HEK293 (cell line): ENCODE measurements at regions of chr15 and their contacts with region 1.

Region 1: DNA sequence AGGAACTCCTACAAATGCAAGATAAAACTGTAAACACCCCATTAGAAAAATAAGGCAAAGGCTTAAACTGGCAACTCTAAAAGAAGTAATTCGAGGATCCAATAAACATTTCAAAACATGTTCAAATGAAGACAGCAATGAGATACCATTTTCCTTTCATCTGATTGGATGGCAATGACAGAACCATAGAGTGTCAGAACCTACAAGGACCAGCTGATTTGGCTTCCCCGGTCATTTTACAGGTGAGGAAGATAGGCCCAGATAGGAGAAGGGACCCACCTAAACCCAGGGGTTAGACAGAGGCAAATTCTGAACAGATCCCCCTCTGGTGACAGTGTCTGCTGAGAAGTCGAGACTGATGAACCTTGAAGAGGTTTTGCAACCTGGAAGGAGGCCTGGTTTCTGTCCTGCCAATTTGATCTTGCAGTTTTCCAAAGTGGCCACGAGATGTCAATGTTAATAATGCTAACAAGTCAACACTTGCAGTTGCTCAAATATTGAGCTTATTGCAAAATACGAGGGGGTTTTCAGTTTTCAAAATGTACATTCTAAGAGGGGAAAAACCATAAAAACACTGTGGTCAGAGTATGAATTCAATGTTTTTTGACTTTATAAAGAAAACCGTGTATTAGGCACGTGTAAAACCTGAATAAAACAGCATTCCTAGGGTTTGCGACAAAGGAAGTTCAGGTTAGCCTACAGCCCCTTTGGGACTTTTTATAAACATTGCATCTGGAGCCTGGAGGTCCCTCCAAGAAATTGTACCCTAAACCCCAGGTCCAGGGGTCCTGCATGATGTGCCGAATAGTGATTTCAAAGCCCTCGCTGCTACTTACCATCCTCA is 21.5 kb downstream of the CFAP161 start:
- H3K4me3 ChIP-seq: no peak overlapping the region
- H3K27ac ChIP-seq: no peak overlapping the region
- H3K4me1 ChIP-seq: no peaks in the 10 kb centered on the region
- CTCF ChIP-seq: peak; percentile 27; the same call in 1 of the 2 replicates

Region 2: DNA sequence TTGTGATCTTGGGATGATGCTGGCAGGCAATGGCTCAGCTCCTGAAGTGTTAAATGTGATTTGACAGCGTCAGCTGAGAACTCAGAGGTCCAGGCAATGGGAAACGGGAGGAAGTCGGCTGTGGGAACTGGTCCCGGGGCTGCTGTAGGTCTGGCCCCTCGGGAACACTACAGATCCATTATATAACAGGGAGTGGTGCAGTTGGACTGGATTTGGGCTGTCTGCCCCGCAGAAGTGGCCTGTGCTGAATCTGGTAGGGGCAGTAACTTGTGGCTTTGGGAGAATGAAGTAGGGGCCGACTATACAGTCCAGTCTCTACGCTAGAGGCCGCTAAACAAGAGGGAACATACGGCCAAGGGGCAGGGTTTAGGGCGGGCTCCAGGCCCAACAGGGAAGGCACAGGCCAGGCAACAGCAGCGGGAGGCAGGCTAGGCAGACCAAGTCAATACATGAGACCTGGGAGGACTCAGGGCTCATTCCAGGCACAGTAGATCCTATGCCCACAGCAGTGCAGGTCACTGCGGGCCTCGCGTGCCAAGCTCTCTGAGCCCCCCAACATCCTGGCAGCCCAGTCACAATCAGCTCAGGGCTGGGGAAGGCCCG is 20.8 kb after region 1 on chr15:
- CTCF ChIA-PET with region 1: interaction called, 12 read pairs
- POLR2A ChIA-PET with region 1: no interaction called
- H3K4me3 ChIP-seq: no peak overlapping the region
- H3K27ac ChIP-seq: no peak overlapping the region
- H3K4me1 ChIP-seq: no peaks in the 10 kb centered on the region
- CTCF ChIP-seq: no peak

Region 3: DNA sequence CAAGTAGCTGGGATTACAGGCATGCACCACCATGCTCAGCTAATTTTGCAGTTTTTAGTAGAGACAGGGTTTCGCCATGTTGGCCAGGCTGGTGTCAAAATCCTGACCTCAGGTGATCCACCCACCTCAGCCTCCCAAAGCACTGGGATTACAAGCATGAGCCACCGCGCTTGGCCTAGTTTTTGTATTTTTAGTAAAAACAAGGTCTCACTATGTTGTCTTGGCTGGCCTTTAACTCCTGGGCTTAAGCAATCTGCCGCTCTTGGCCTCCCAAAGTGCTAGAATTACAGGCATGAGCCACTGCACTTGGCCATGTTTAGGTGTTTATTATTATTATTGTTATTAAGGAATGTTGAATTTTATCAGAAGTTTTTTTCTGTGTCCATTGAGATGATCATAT is 55.8 kb after region 1 on chr15:
- CTCF ChIA-PET with region 1: no interaction called
- POLR2A ChIA-PET with region 1: no interaction called
- H3K4me3 ChIP-seq: no peak overlapping the region
- H3K27ac ChIP-seq: no peak overlapping the region
- H3K4me1 ChIP-seq: no peaks in the 10 kb centered on the region
- CTCF ChIP-seq: no peak

Region 4: GRCh38 chr15:81244306-81244705 is 88.7 kb after region 1 on chr15:
- CTCF ChIA-PET with region 1: interaction called, 14 read pairs
- POLR2A ChIA-PET with region 1: no interaction called
- H3K4me3 ChIP-seq: no peak overlapping the region
- H3K27ac ChIP-seq: no peak overlapping the region
- H3K4me1 ChIP-seq: no peaks in the 10 kb centered on the region
- CTCF ChIP-seq: no peak